HCT116 (cell line): ENCODE measurements at regions of chr6 and their contacts with region 1.

Region 1: GRCh38 chr6:37324131-37325033 is 29.4 kb upstream of the RNF8 start:
- DNase-seq: peak; percentile 28
- ATAC-seq: peak; percentile 35; the same call in 1 of the 2 replicates
- H3K4me3 ChIP-seq: no peak overlapping the region
- H3K27ac ChIP-seq: no peak overlapping the region
- H3K4me1 ChIP-seq: peaks cover 0 to 22% of the 10 kb centered on the region in 2 experiments; a peak in 2 of 4 replicates
- H3K27me3 ChIP-seq: no peaks in the 10 kb centered on the region
- CTCF ChIP-seq: no peak
- POLR2A ChIP-seq: no peak
- RAD21 ChIP-seq: no peak

Region 2: DNA sequence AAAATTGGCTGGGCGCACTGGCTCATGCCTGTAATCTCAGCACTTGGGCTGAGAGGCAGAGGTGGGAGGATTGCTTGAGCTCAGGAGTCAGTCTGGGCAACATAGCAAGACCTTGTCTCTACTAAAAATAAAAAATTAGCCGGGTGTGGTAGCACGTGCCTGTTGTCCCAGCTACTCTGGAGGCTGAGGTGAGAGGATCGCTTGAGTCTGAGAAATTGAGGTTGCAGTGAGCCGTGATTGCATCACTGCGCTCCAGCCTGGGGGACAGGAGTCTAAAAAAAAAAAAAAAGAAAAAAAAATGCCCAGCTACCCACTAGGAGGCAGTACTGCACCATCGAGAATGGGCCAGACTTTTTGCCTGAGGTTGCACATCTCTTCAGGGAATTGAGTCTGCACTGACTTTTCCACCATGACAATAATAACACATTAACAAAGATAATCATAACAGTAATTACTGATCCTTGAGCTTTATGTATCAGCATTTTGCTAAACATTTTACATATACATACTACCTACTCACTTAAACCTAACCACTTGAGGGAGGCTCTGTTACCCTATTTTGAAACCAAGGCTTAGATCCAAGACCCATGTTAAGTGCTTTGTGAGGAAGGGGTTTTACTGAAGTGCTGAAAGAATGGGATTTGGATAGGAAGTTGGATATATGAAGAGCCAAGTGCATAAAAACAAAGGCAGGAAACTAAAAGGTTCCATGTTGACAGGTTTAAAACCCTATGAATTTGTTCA is 709.2 kb before region 1 on chr6:
- CTCF ChIA-PET with region 1: no interaction called
- POLR2A ChIA-PET with region 1: no interaction called
- RAD21 ChIA-PET with region 1: no interaction called
- intact Hi-C with region 1: no loop called
- DNase-seq: peak; percentile 41
- ATAC-seq: peak; percentile 58
- H3K4me3 ChIP-seq: no peak overlapping the region
- H3K27ac ChIP-seq: no peak overlapping the region
- H3K4me1 ChIP-seq: peaks cover 16 to 17% of the 10 kb centered on the region in 2 experiments
- H3K27me3 ChIP-seq: no peaks in the 10 kb centered on the region
- CTCF ChIP-seq: peak; percentile 70 to 86 (median 79)
- POLR2A ChIP-seq: no peak
- RAD21 ChIP-seq: peak; percentile 89

Region 3: GRCh38 chr6:36962874-36963273 is 361.5 kb before region 1 on chr6:
- CTCF ChIA-PET with region 1: no interaction called
- POLR2A ChIA-PET with region 1: no interaction called
- RAD21 ChIA-PET with region 1: no interaction called
- intact Hi-C with region 1: no loop called
- DNase-seq: no peak
- ATAC-seq: 0 out of 2 replicates have a peak, but pooled peaks have one; percentile 18
- H3K4me3 ChIP-seq: no peak overlapping the region
- H3K27ac ChIP-seq: no peak overlapping the region
- H3K4me1 ChIP-seq: peaks cover 15 to 44% of the 10 kb centered on the region in 2 experiments
- H3K27me3 ChIP-seq: no peaks in the 10 kb centered on the region
- CTCF ChIP-seq: no peak
- POLR2A ChIP-seq: no peak
- RAD21 ChIP-seq: no peak

Region 4: GRCh38 chr6:37381579-37381978 is 57.2 kb after region 1 on chr6:
- CTCF ChIA-PET with region 1: no interaction called
- POLR2A ChIA-PET with region 1: no interaction called
- RAD21 ChIA-PET with region 1: no interaction called
- intact Hi-C with region 1: loop called (anchors 2 kb)
- DNase-seq: peak; percentile 74
- ATAC-seq: peak; percentile 91
- H3K4me3 ChIP-seq: no peak overlapping the region
- H3K27ac ChIP-seq: no peak overlapping the region
- H3K4me1 ChIP-seq: no peaks in the 10 kb centered on the region
- H3K27me3 ChIP-seq: no peaks in the 10 kb centered on the region
- CTCF ChIP-seq: peak; percentile 73 to 81 (median 77)
- POLR2A ChIP-seq: no peak
- RAD21 ChIP-seq: peak; percentile 72